ENCODE measurements at regions of chr6 and their contacts with region 1.

Region 1: DNA sequence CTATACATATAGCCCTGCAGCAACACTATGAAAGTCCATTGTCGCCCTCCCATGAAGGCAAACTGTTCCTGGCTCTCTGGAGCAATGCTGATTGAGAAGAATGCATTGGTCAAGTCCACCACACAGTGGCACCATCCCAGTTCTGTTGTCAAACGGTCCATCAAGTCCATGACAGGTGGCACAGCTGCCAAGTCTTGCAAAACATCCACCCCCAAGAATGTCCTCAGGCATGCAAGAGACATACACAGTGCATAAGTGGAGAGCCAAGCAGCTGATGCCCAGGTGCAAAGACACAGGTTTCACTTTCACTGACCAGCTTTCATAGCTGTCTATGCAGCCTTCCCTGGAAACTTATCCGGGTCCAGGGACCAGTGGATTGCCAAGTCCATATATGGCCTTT is 17.5 kb downstream of the ZNF391 start:
- DNase-seq: no peak
- ATAC-seq: no peak
- H3K4me3 ChIP-seq: no peak overlapping the region
- H3K27ac ChIP-seq: no peak overlapping the region
- H3K4me1 ChIP-seq: no peaks in the 10 kb centered on the region
- H3K27me3 ChIP-seq: no peaks in the 10 kb centered on the region
- CTCF ChIP-seq: no peak
- POLR2A ChIP-seq: no peak

Region 2: GRCh38 chr6:27452496-27452897 is 46.4 kb after region 1 on chr6:
- intact Hi-C with region 1: loop called in 1 of 2 experiments (anchors 10 kb)
- DNase-seq: no peak
- ATAC-seq: no peak
- H3K4me3 ChIP-seq: no peak overlapping the region
- H3K27ac ChIP-seq: no peak overlapping the region
- H3K4me1 ChIP-seq: no peaks in the 10 kb centered on the region
- H3K27me3 ChIP-seq: no peaks in the 10 kb centered on the region
- CTCF ChIP-seq: no peak
- POLR2A ChIP-seq: no peak

Measured in right lobe of liver (tissue), 6 donors.